AG04449 (cell line): ENCODE measurements at regions of chr2 and their contacts with region 1.

Region 1: DNA sequence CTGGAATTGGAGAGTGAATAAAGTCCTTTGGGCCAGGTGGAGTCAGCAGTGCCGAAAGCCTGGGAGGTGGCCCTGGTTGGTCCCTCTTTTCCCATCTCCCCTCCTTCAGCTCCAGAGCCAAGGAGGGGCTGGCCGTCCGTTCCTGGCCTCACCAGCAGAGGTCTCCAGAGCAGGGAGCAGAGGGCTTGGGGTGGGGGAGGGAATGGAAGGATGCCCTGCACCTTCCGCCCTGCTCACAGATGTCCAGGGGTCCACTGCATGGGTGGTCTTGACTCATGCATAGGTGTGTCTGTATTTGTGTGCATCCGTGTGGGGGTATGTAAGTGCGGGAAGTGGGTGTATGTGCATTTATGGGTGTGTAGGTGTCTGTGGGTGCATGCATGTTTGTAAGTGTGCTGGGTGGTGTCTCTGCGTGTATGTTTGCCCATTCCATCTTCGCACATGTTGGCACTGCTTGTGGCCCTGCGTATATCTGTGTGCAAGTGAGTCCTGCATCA is 201.8 kb downstream of the ZFP36L2 start:
- DNase-seq: no peak
- H3K4me3 ChIP-seq: no peak overlapping the region
- CTCF ChIP-seq: peak; percentile 98

Region 2: GRCh38 chr2:43010438-43011157 is 14.0 kb before region 1 on chr2:
- CTCF ChIA-PET with region 1: interaction called, 31 read pairs
- POLR2A ChIA-PET with region 1: no interaction called
- DNase-seq: no peak
- H3K4me3 ChIP-seq: no peak overlapping the region
- CTCF ChIP-seq: no peak

Region 3: DNA sequence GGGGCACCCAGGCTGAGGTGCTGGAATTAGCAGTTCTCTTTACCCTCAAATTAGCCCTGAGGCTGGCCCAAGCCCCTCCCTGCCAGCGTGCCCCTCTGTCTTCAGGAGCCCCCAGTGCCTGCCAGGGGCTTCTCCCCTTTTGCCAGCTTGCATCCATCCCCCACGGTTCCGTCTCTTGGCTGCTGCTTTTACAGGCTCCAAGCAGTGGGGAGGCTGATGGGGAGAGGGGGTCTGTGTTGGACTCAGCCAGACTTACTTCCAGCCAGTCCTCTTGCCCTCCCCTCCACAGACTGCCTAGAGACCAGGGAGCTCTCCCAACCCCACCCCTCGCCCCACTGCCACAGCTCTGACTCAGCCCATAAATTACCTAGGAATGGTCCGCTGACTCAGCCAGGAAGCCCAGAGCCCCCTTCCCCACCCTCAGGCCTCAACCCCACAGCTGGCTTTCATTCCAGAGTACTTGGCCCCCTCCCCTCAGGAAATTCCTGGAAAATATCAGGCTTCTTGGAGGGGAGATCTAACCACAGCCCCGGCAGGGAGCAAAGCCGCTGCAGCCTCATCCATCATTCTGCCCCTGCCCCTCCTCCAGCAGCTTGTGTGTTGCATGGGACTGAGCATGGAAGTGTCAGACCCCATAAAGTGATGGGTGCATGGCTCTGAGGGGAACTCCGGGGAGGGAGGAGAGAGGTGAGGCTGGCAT is 17.2 kb after region 1 on chr2:
- CTCF ChIA-PET with region 1: interaction called, 12 read pairs
- POLR2A ChIA-PET with region 1: interaction called, 3 read pairs
- DNase-seq: peak; percentile 71
- H3K4me3 ChIP-seq: no peak overlapping the region
- CTCF ChIP-seq: no peak

Region 4: GRCh38 chr2:43251171-43251731 is 226.7 kb after region 1 on chr2:
- CTCF ChIA-PET with region 1: no interaction called
- POLR2A ChIA-PET with region 1: no interaction called
- DNase-seq: peak; percentile 45
- H3K4me3 ChIP-seq: no peak overlapping the region; the same call in 1 of the 2 replicates
- CTCF ChIP-seq: no peak